Left lung (tissue), 14 donors: ENCODE measurements at regions of chr1 and their contacts with region 1.

Region 1: DNA sequence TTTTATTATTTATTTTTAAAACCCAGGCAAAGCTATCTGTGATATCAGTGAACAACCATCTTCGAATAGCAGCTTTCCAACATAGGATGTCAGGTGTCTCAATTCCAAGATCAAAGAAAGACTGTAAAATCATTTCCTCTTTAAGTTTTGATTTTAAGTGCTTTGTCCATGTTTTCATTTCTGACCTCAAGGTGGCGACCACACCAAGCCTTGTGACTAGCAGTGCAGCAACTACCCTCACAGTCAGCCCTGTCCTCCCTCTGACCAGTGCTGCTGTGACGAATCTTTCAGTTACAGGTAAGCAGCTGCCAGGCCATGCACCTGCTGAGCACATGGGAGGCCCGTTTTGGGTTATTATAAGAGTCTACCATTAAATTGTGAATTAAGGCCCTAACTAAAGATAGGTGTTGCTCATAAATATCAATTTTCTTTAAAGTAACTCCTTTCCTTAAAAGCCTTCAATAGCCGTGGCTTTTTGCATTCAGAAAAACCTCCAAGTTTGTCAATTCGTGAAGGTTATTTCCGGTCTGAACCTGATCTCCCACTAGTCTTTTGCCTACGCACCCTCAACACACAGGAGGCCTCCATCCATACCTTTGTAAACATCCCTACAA is 117.0 kb downstream of the CD247 start:
- DNase-seq: peak in 2 of 4 donors; percentile 53 to 60
- ATAC-seq: peak; percentile 96
- H3K4me3 ChIP-seq: no peak overlapping the region
- H3K27ac ChIP-seq: no peak overlapping the region
- H3K4me1 ChIP-seq: peaks cover 0 to 7% of the 10 kb centered on the region in 2 donors
- H3K27me3 ChIP-seq: no peaks in the 10 kb centered on the region
- CTCF ChIP-seq: peak; percentile 42 to 48

Region 2: DNA sequence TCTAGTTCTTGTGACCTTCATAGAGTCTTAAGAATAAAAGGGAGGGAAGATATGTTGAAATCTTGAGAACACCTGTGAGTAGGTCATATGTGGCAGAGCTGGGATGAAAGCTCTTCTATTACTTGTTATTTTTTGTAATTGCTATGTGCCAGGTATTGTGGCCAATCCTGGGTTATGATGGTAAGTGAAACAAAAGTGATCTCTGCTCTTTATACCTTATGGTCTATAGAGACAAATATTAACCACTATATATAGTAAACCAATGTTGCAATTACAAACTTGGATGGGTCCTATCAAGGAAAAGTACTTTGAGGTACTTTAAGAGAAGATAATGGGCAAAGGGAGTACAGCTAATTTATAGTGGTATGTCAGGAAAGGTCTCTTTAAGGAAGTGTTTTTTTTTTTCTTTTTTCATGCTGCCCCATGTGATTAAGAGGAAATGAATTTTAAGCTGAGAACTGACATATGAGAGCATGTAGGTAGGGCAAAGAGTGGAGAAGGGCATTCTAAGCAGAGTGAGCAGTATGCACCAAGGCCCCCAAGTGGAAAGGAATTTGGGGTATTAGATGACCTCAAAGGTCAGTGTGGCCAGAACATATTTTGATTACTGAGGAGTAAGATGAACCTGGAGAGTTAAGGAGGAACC is 137.4 kb before region 1 on chr1:
- intact Hi-C with region 1: loop called in 1 of 2 experiments (anchors 10 kb)
- DNase-seq: no peak
- ATAC-seq: peak; percentile 66
- H3K4me3 ChIP-seq: no peak overlapping the region
- H3K27ac ChIP-seq: peak overlapping the region in 1 of 2 donors; percentile 39
- H3K4me1 ChIP-seq: peaks cover 4 to 44% of the 10 kb centered on the region in 2 donors
- H3K27me3 ChIP-seq: no peaks in the 10 kb centered on the region
- CTCF ChIP-seq: no peak